Activated CD8-positive, alpha-beta T cell treated with anti-CD3 and anti-CD28 coated beads, Interleukin-2, amount 10 ng/mL, durations not matched to agents 7 days and 5 days (primary cell): ENCODE measurements at regions of chr14 and their contacts with region 1.

Region 1: DNA sequence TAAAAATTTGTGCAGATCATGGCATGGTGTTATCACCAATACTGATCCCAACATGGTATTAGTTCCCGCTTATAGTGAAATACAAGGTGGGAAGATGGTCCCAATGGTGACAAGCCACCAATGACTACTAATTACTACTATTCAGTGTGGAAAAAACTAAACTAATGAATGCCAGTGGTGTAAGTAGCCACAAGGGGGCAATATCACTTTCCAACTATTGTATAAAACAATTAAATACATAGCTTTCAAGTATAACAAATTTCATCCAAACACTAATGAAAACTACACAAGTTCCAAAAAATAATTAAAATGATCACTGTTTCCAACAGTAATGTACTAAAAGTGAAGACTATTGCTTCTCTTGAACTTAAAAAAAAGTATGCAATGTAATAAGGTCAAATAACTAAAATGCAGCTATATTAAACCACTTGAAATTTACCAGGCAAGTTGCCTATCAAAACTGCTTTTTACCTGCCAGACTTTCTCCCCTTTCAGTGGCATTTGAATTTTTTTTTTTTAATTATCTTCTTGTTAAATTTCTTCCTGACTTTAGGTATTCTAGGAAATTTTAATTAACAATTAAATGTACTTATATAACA is 58.0 kb downstream of the PAPLN start:
- DNase-seq: peak; percentile 37
- ATAC-seq: no peak
- H3K4me3 Mint-ChIP-seq: no peak overlapping the region
- H3K27ac Mint-ChIP-seq: no peak overlapping the region
- H3K4me1 Mint-ChIP-seq: peaks cover 6% of the 10 kb centered on the region
- H3K27me3 Mint-ChIP-seq: no peaks in the 10 kb centered on the region

Region 2: DNA sequence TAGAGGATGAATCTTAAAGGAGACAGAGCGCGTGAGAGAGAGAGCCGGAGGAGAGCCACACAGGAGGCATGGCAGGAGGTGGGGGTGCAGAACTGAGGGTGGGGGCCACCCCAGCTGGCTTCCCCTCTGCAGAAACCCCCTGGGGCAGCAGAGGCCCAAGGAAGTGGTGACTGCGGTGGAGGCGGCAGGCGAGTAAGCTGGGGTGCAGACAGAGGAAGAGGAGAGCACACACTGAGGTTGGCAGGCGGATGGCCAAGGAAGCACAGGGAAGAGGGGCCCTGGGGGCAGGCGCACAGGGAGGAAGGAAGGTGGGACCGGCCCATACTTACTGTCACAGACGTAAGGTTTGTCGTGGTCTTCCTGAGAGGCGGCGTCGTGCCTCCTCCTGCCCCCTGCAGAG is 581.2 kb before region 1 on chr14:
- CTCF ChIA-PET with region 1: no interaction called
- POLR2A ChIA-PET with region 1: no interaction called
- DNase-seq: peak; percentile 82
- ATAC-seq: peak; percentile 77
- H3K4me3 Mint-ChIP-seq: peak overlapping the region; percentile 48
- H3K27ac Mint-ChIP-seq: peak overlapping the region; percentile 68
- H3K4me1 Mint-ChIP-seq: peaks cover 47% of the 10 kb centered on the region
- H3K27me3 Mint-ChIP-seq: peaks cover 3% of the 10 kb centered on the region

Region 3: DNA sequence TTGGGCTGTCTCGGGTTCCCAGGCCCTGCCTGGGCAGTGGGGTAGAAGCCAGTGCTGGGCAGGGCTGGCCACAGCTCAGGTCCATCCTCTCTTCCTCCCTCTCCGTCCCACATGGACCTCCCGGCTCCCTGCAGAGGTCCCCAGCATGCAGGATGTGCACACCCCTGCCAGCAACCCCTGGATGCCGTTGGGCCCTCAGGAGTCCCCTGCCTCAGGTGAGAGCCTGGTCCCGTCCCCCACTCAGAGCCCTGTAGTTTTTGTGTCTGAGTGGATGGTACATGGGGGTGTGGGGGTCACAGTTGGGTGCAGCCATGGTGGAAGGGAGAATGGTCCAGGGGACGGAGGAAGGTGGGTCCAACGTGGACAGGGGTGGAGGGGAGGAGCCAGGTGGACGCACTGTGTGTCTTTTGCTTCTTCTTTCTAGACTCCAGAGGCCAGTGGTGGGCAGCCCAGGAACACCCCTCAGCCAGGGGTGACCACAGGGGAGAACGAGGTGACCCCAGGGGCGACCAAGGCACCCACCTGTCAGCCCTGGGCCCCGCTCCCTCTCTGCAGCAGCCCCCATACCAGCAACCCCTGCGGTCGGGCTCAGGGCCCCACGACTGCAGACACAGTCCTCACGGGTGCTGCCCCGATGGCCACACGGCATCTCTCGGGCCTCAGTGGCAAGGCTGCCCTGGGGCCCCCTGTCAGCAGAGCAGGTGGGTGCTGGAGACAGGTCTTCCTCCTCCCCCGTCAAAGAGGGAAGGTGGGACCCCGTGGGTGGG is 36.3 kb before region 1 on chr14:
- CTCF ChIA-PET with region 1: no interaction called
- POLR2A ChIA-PET with region 1: no interaction called
- DNase-seq: no peak
- ATAC-seq: no peak
- H3K4me3 Mint-ChIP-seq: no peak overlapping the region
- H3K27ac Mint-ChIP-seq: no peak overlapping the region
- H3K4me1 Mint-ChIP-seq: peaks cover 3% of the 10 kb centered on the region
- H3K27me3 Mint-ChIP-seq: no peaks in the 10 kb centered on the region

Region 4: GRCh38 chr14:73311708-73312030 is 16.4 kb after region 1 on chr14:
- CTCF ChIA-PET with region 1: interaction called, 15 read pairs
- POLR2A ChIA-PET with region 1: no interaction called
- DNase-seq: no peak
- ATAC-seq: no peak
- H3K4me3 Mint-ChIP-seq: no peak overlapping the region
- H3K27ac Mint-ChIP-seq: no peak overlapping the region
- H3K4me1 Mint-ChIP-seq: peaks cover 15% of the 10 kb centered on the region
- H3K27me3 Mint-ChIP-seq: no peaks in the 10 kb centered on the region

Region 5: GRCh38 chr14:73325630-73326299 is 30.5 kb after region 1 on chr14:
- CTCF ChIA-PET with region 1: interaction called, 11 read pairs
- POLR2A ChIA-PET with region 1: no interaction called
- DNase-seq: no peak
- ATAC-seq: peak; percentile 82
- H3K4me3 Mint-ChIP-seq: peak overlapping the region; percentile 26
- H3K27ac Mint-ChIP-seq: peak overlapping the region; percentile 66
- H3K4me1 Mint-ChIP-seq: peaks cover 30% of the 10 kb centered on the region
- H3K27me3 Mint-ChIP-seq: no peaks in the 10 kb centered on the region

Region 6: DNA sequence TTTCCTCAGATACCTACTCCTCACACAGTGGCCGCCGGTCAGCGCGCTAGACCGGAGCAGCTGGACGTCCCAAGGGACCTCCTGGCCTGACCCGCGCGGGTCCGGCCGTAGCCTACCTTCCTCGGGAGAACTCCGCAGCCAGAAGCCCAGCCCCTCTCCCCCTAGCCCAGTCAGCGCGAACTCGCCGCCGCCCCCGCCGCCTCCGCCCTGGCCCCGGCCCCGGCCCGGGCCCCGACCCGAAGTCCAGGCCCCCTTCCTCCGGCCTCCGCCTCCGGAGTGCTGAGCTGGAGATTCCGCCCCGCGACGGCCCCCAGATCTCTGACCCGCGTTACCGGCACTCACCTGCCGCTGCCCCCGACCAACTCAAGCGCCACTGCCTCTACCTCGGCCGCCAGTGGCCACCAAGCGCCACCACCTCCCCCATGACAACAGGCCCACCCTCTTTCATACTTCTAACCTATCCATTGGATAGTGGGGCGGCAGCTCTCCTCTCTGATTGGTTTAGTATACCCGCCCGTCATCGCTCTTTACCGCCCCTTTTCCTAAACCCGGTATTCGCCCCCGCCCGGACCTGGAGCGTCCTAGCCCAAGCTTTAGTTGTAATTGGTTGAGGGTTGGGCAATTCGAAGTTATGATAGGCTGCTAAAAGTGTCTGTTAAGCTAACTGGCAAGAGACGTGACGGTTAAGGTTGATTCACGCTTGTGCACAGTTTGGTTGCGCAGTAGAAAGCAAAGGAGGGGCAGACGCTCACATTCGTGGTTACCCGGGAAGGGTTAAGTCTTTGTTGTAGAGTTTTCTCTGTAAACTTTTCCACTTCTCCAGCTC is 163.1 kb after region 1 on chr14 and contains the start of gene NUMB:
- CTCF ChIA-PET with region 1: interaction called, 25 read pairs
- POLR2A ChIA-PET with region 1: interaction called, 3 read pairs
- DNase-seq: peak; percentile 99
- ATAC-seq: peak; percentile 99
- H3K4me3 Mint-ChIP-seq: peak within 1 kb of the TSS; percentile 97
- H3K27ac Mint-ChIP-seq: peak within 1 kb of the TSS; percentile 93
- H3K4me1 Mint-ChIP-seq: peaks cover 46% of the 10 kb centered on the region
- H3K27me3 Mint-ChIP-seq: peaks cover 3% of the 10 kb centered on the region
- total RNA-seq, gene NUMB: 37.7 to 40.2 TPM

Region 7: DNA sequence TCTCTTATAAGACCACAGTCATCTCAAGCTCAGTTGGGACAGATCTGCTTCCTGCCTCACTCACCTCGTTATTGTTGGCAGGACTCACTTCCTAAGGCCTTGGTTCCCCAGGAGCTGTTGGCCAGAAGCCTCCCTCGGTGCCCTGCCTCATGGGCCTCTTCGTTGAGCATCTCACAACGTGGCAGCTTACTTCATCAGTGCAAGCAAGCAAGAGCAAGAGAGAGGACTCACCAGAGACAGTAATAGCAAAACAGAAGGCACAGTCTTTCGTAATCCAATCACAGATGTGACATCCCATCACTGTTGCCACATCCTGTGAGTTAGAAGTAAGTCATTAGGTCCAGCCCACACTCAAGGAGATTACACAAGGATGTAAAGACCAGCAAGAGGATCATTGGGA is 168.1 kb after region 1 on chr14:
- CTCF ChIA-PET with region 1: interaction called, 124 read pairs
- POLR2A ChIA-PET with region 1: interaction called, 3 read pairs
- DNase-seq: peak; percentile 56
- ATAC-seq: no peak
- H3K4me3 Mint-ChIP-seq: no peak overlapping the region
- H3K27ac Mint-ChIP-seq: peak overlapping the region; percentile 77
- H3K4me1 Mint-ChIP-seq: peaks cover 56% of the 10 kb centered on the region
- H3K27me3 Mint-ChIP-seq: peaks cover 3% of the 10 kb centered on the region

Region 8: DNA sequence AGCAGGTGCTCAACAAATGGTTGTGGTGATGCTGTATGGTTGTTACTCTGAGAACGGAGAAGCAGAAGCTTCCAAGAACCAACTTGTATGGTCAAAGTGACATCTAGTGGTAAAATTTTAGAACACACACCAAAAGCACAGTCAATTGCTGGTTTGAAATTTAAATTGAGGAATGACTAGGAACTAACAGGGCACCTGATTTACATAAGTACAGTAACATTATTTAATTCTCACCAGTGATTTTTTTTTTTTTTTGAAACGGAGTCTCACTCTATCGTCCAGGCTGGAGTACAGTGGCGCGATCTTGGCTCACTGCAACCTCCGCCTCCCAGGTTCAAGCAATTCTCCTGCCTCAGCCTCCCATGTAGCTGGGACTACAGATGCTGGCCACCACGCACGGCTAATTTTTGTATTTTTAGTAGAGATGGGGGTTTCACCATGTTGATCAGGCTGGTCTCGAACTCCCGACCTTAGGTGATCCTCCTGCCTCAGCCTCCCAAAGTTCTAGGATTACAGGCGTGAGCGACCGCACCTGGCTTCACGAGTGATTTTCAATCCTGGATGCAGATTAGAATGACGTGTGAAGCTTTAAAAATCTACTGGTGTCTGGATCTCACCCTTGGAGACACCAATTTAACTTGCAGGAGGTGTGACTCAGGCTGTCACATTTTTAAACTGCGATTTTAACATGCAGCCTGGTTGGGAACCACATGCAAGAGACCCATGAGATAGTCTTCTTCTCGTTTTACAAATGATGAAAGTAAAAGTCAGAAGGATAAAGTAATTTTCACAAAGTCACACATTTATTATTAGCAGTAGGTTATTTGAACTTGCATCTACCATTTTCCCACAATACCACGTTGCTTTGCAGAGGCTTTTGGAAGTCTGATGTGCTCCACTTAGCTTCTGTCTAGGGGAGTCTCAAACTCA is 177.2 kb after region 1 on chr14:
- CTCF ChIA-PET with region 1: interaction called, 124 read pairs
- POLR2A ChIA-PET with region 1: no interaction called
- DNase-seq: peak; percentile 37
- ATAC-seq: peak; percentile 79
- H3K4me3 Mint-ChIP-seq: no peak overlapping the region
- H3K27ac Mint-ChIP-seq: no peak overlapping the region
- H3K4me1 Mint-ChIP-seq: peaks cover 3% of the 10 kb centered on the region
- H3K27me3 Mint-ChIP-seq: no peaks in the 10 kb centered on the region

Region 9: DNA sequence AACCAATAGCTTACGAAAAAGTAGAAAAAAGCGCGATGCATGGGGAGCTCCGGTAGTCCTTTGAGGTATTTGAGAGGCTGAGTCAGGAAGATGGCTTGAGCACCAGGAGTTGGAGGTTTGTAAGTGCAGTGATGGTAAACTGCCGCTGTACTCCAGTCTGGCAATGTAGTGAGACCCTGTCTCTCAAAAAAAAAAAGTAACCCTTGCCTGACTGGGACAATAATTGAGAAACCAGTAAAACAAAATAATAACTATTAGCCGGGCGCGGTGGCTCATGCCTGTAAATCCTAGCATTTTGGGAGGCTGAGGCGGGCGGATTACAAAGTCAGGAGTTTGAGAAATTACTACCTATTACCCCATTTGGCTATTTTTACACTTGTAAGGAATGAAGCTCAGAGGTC is 273.1 kb after region 1 on chr14:
- CTCF ChIA-PET with region 1: interaction called, 10 read pairs
- POLR2A ChIA-PET with region 1: no interaction called
- DNase-seq: peak; percentile 34
- ATAC-seq: no peak
- H3K4me3 Mint-ChIP-seq: peak overlapping the region; percentile 92
- H3K27ac Mint-ChIP-seq: peak overlapping the region; percentile 98
- H3K4me1 Mint-ChIP-seq: peaks cover 36% of the 10 kb centered on the region
- H3K27me3 Mint-ChIP-seq: no peaks in the 10 kb centered on the region